ENCODE measurements at regions of chr12 and their contacts with region 1.

Region 1: DNA sequence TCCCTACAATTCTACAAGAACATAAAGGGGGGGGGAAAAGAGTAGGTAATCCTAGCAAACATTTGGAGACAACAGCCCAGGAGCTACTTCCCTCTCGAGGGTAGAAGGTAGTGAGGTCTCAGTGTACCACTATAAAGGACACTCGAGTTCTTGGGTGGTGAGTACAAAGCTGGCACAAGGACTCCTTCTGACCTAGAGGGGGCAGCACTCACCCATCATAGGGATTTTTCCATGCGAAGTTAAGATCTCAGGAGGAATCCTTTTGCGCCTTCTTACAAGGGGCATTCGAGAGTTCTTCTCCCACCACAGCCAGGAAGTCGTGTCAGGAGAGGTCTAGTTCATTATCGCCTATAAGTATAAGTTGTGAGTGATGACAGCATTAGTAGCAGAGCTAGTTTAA is 200.2 kb upstream of the RBM19 start:
- H3K4me3 ChIP-seq: no peak overlapping the region
- H3K27ac ChIP-seq: no peak overlapping the region
- H3K4me1 ChIP-seq: no peaks in the 10 kb centered on the region
- CTCF ChIP-seq: peak; percentile 42; the same call in 1 of the 2 replicates

Region 2: DNA sequence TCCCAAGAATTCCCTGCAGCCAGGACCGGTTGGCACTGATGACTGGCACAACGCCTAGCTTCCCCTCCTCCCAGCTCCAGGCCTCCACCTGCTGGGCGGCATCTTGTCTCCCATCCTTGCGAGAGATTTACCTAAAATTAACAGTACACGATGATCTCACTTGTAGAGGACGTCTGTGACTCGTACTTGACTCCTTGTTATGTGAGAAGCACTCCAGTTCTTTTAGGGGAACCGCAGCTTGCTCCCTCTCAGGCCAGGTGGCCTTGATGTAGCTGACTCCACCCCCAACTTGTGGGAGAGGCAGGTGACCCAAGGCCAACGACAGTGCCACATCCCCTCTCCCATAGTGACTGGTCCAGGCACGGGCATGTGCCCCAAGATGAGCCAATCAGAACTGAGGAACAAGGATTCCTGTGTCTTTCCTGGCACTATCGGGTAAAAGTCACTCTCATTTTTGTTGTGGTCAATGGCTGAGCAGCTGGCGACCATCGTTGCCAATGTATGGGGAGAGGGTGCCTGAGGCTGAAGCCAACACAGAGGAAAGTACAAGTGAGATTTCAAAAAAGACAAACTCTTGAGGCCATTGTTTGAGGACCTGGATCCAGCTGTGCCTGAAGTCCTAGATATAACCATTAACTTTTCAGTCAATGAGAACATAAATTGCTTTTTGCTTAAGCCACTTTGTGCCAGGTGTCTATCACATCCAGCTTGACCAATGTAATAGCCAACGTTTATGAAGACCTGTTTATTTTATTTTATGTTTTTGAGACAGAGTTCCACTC is 408.9 kb before region 1 on chr12:
- CTCF ChIA-PET with region 1: no interaction called
- POLR2A ChIA-PET with region 1: no interaction called
- H3K4me3 ChIP-seq: no peak overlapping the region
- H3K27ac ChIP-seq: no peak overlapping the region
- H3K4me1 ChIP-seq: no peaks in the 10 kb centered on the region
- CTCF ChIP-seq: no peak

Region 3: GRCh38 chr12:114152890-114153289 is 13.5 kb before region 1 on chr12:
- CTCF ChIA-PET with region 1: interaction called, 11 read pairs
- POLR2A ChIA-PET with region 1: no interaction called
- H3K4me3 ChIP-seq: no peak overlapping the region
- H3K27ac ChIP-seq: no peak overlapping the region
- H3K4me1 ChIP-seq: no peaks in the 10 kb centered on the region
- CTCF ChIP-seq: no peak

Region 4: DNA sequence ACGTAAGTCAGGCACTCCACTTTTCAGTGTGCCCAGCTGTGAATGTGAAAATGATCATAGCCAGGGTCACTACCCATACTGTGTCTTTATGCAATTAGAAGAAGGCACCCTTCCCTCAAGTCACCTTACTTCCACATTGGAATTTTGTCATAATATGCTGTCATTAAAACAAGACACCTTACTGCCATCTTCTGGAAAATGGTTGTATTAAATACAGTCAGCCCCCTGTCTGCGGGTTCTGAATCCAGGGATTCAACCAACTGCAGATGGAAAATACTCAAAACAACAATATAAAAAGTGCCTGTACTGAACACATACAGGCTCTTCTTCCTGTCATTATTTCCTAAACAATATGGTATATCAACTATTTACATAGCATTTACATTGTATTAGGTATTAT is 309.8 kb after region 1 on chr12:
- CTCF ChIA-PET with region 1: interaction called, 45 read pairs
- POLR2A ChIA-PET with region 1: no interaction called
- H3K4me3 ChIP-seq: no peak overlapping the region
- H3K27ac ChIP-seq: no peak overlapping the region
- H3K4me1 ChIP-seq: no peaks in the 10 kb centered on the region
- CTCF ChIP-seq: 0 out of 2 replicates have a peak, but pooled peaks have one; percentile 45

Region 5: DNA sequence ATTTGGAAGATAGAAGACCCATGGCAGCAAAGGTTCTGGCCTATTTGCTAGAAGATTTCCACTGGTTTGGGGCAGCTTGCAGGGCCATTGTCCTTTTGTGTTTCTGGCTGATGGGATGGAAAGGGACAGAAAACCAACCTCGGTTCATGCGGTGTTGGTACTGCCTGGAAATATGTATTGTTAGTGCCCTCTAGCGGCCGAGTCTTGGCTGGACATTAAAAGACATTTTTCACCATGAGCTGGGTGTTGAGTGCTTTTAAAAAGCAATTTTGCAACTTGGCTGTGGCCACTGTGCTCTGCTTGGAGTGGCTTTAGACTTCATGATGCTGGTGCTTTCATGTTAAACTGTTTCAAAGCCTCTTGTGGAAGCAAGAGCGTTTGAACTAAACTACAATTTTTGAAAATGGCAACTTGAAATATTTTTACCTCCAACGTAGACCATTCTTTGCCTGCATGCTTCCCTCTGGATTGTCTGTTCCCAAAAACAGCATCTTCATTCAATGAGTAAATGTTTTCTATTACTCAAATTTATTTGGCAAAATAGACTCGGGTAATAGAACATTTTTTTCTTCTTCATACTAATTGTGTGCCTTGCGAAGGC is 342.3 kb after region 1 on chr12:
- CTCF ChIA-PET with region 1: interaction called, 28 read pairs
- POLR2A ChIA-PET with region 1: no interaction called
- H3K4me3 ChIP-seq: no peak overlapping the region
- H3K27ac ChIP-seq: no peak overlapping the region
- H3K4me1 ChIP-seq: no peaks in the 10 kb centered on the region
- CTCF ChIP-seq: peak; percentile 39; the same call in 1 of the 2 replicates

Measured in HEK293 (cell line).